Esophagus muscularis mucosa (tissue), 4 donors: ENCODE measurements at regions of chr2 and their contacts with region 1.

Region 1: GRCh38 chr2:28661589-28662001 is 90.0 kb upstream of the PPP1CB start:
- DNase-seq: no peak
- H3K4me3 ChIP-seq: no peak overlapping the region
- H3K27ac ChIP-seq: peak overlapping the region; percentile 88 to 92 (median 90)
- H3K4me1 ChIP-seq: peaks cover 48 to 99% (median 93%) of the 10 kb centered on the region in 4 donors
- H3K27me3 ChIP-seq: no peaks in the 10 kb centered on the region
- CTCF ChIP-seq: no peak
- EP300 ChIP-seq: peak; percentile 93
- POLR2A ChIP-seq: no peak

Region 2: GRCh38 chr2:28594289-28595108 is 67.1 kb before region 1 on chr2:
- intact Hi-C with region 1: loop called (anchors 5 kb)
- DNase-seq: peak; percentile 98
- H3K4me3 ChIP-seq: peak overlapping the region; percentile 11 to 25 (median 18)
- H3K27ac ChIP-seq: peak overlapping the region; percentile 85 to 94 (median 92)
- H3K4me1 ChIP-seq: peaks cover 34 to 58% (median 53%) of the 10 kb centered on the region in 4 donors
- H3K27me3 ChIP-seq: no peaks in the 10 kb centered on the region
- CTCF ChIP-seq: peak; percentile 77 to 92 (median 86)
- EP300 ChIP-seq: no peak
- POLR2A ChIP-seq: no peak

Region 3: GRCh38 chr2:28621172-28622100 is 40.2 kb before region 1 on chr2:
- intact Hi-C with region 1: loop called (anchors 5 kb)
- DNase-seq: peak; percentile 97
- H3K4me3 ChIP-seq: peak overlapping the region in 1 of 4 donors; percentile 30
- H3K27ac ChIP-seq: peak overlapping the region; percentile 92 to 98 (median 96)
- H3K4me1 ChIP-seq: peaks cover 55 to 92% (median 87%) of the 10 kb centered on the region in 4 donors
- H3K27me3 ChIP-seq: no peaks in the 10 kb centered on the region
- CTCF ChIP-seq: peak in 1 of 3 experiments; percentile 31
- EP300 ChIP-seq: peak; percentile 94
- POLR2A ChIP-seq: no peak